Activated CD4-positive, alpha-beta memory T cell treated with anti-CD3 and anti-CD28 coated beads, Interleukin-2, amount 10 ng/mL, durations not matched to agents 7 days and 5 days (primary cell): ENCODE measurements at regions of chr13 and their contacts with region 1.

Region 1: DNA sequence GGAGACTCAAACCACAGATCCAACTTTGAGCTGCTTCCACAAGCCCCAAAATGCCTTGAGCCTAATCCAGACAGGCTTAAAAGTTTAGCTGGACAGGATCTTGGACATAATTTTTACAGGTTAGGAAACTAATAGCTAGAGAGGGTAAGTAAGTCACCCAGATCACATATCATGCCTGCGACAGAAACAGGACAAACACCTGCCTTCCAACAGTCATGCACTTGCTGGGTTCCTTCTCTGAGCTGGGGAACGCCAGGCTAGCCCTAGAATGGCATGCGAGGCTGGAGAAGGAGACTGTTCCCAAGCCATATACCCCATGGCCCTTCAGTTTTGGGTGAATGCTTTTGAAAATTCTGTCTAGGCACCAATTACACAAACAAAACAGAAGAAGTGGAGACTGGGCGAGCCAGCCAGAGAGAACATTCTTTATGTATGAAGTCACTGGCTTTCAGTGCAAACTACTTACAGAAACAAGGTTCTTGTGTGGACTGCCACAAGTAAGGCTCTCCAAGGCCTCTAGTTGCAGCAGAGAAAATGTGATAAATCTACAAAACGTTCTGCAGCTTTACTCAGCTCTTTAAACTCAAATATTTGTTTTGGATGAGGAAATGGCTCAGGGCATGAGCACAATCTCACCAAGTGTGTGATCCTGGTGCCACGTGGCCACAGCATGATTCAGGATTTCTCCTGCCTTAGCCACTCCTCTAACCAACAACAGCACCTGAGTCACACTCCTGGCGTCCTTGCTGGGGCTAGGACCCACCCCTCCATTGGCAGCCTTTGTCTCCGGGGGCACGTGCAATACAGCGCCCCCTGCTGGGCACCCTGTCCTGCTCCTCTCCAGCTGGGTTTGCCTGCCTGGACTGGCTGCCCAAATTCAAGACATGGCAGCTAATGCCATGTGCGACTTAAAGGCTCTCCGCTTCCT is 73.4 kb upstream of the UBL3 start:
- DNase-seq: peak; percentile 60
- H3K4me3 Mint-ChIP-seq: no peak overlapping the region
- H3K27ac Mint-ChIP-seq: no peak overlapping the region
- H3K4me1 Mint-ChIP-seq: peaks cover 38% of the 10 kb centered on the region
- H3K27me3 Mint-ChIP-seq: no peaks in the 10 kb centered on the region

Region 2: GRCh38 chr13:29850224-29850898 is 73.5 kb before region 1 on chr13 and contains the start of gene UBL3:
- CTCF ChIA-PET with region 1: interaction called, 11 read pairs
- POLR2A ChIA-PET with region 1: interaction called, 5 read pairs
- DNase-seq: peak; percentile 95
- H3K4me3 Mint-ChIP-seq: peak within 1 kb of the TSS; percentile 96
- H3K27ac Mint-ChIP-seq: peak within 1 kb of the TSS; percentile 95
- H3K4me1 Mint-ChIP-seq: peaks cover 37% of the 10 kb centered on the region
- H3K27me3 Mint-ChIP-seq: no peaks in the 10 kb centered on the region
- total RNA-seq, gene UBL3: 17.3 to 17.8 TPM

Region 3: GRCh38 chr13:29902101-29902952 is 21.5 kb before region 1 on chr13:
- CTCF ChIA-PET with region 1: interaction called, 20 read pairs
- POLR2A ChIA-PET with region 1: no interaction called
- DNase-seq: peak; percentile 53
- H3K4me3 Mint-ChIP-seq: peak overlapping the region; percentile 63
- H3K27ac Mint-ChIP-seq: peak overlapping the region; percentile 61
- H3K4me1 Mint-ChIP-seq: peaks cover 24% of the 10 kb centered on the region
- H3K27me3 Mint-ChIP-seq: peaks cover 21% of the 10 kb centered on the region

Region 4: DNA sequence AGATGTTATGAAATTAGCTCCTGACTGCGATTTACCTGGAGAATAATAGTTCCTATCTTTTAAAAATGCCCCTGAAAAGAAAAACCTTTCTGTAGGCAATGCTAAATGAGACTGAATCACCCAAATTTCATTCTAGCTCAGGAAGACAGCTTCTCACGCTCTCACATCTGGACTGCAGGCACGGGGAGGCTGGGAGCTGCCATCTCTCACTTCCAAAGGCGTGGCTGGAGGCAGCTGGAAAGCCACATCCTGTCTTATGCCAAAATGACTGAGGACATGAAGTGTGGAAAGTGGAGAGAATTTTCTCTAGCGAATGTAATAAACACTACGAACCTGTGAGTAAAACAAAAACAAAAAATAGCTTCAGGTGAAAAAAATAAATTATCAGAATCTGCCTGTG is 15.4 kb before region 1 on chr13:
- CTCF ChIA-PET with region 1: interaction called, 20 read pairs
- POLR2A ChIA-PET with region 1: no interaction called
- DNase-seq: no peak
- H3K4me3 Mint-ChIP-seq: no peak overlapping the region
- H3K27ac Mint-ChIP-seq: no peak overlapping the region
- H3K4me1 Mint-ChIP-seq: peaks cover 20% of the 10 kb centered on the region
- H3K27me3 Mint-ChIP-seq: no peaks in the 10 kb centered on the region

Region 5: DNA sequence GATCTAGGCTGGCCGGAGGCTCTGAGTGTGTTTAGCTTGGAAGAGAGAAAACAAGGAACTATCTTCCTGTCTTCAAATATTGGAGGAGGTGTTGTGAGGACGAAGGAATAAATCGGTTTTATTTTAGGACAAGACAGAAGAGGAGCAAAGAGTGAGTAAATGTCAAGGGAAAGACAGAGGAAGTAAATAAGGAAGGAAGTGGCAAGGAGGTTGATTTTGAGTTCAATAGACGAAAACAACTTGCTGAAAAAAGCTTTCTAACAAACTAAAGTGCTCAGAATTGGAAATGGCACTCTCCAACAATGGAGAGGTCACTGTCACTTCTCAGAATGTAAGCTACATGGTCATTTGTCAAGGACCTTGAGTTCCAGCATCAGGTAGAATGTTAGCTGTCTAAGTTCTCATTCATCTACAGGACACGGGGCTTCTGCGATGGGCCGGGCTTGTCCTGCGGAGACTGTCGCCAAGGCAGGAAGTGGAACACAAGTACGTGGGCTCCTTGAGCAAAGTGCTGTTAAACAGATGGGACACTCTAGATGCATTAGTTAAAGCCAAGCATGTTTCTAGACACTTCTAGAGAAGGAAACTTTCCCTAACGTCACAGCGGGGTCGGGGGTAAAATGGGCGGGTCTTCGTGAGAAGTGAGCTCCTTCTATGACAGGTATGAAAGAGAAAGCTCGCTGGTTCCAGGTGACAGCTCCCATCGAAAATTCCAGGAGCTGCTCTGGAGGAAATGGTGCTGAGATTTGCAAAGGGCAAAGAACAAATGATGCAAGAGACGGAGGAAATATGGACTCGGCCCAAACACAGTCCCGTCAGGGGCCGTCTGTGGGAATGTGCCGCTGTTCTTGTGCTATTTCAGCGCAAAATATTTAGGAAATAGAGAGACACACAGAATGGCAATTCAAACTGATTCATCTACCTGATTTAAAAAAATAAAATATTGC is 30.5 kb after region 1 on chr13:
- CTCF ChIA-PET with region 1: interaction called, 11 read pairs
- POLR2A ChIA-PET with region 1: no interaction called
- DNase-seq: peak; percentile 69
- H3K4me3 Mint-ChIP-seq: peak overlapping the region; percentile 61
- H3K27ac Mint-ChIP-seq: peak overlapping the region; percentile 91
- H3K4me1 Mint-ChIP-seq: peaks cover 41% of the 10 kb centered on the region
- H3K27me3 Mint-ChIP-seq: peaks cover 5% of the 10 kb centered on the region

Region 6: DNA sequence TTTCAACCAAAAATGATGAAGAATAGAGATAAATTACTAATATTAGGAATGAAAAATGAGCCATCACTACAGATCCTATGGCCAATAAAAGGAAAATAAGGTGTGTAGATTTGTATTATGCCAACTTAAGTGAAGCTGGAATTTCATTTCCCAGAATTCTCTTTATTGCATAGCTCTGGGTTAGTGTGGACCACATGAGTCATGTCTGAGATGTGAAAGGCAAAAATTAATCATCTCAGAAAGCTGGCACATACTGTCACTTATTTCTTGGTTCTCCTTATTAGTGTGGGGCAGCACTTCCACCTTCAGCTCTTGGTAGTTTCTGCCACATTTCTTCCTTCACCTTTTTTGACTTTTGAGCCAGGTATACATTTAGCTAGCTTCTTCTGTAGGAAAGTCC is 300.9 kb after region 1 on chr13:
- CTCF ChIA-PET with region 1: no interaction called
- POLR2A ChIA-PET with region 1: no interaction called
- DNase-seq: no peak
- H3K4me3 Mint-ChIP-seq: no peak overlapping the region
- H3K27ac Mint-ChIP-seq: no peak overlapping the region
- H3K4me1 Mint-ChIP-seq: peaks cover 11% of the 10 kb centered on the region
- H3K27me3 Mint-ChIP-seq: no peaks in the 10 kb centered on the region